AG04450 (cell line): ENCODE measurements at regions of chr1 and their contacts with region 1.

Region 1: DNA sequence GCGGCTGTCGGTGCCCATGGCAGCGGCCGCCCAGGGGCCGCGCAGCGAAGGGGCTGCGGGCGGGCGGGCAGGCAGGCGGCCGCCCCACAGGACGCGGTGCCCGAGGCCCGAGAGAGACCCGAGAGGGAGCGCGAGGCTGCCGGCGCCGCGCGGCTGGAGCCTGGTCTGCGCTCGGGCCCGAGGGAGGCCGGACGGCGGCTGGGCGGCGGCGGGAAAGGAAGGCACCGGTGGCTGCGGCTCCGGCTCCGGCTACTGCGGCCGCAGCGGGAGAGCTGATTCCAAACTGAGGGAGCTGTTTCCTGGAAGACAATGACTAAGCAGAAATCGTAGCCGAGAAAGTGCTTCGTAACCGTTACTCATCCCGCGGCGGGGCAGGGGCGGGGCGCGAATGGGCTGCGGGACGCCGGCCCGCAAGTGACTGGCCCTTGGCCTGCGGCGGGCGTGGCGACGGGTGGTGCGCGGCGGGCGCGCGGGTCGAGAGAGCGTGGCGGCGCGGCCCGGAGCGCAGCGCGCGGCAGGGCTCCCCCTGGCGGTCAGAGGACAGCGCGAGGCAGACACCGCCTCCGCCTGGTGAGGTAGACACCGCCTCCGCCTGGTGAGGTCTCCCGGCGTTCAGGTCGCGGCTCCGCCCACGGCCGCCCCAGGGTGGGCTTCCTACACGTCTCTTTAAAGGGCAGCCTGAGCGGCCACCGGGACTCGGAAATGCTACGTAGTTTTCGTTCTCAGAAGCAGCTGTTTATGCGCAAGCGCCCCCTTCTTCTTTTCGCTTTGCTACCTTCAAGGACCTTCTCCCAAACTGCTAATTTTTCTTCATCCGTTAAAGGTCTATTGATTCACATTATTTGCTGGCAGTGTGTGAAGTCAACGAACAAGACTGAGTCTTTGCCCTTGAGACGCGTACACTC is at the start of gene GCLM:
- DNase-seq: peak; percentile 86
- H3K4me3 ChIP-seq: peak within 1 kb of the TSS; percentile 95
- H3K27ac ChIP-seq: peak within 1 kb of the TSS; percentile 33
- H3K27me3 ChIP-seq: peaks cover 2% of the 10 kb centered on the region
- CTCF ChIP-seq: peak; percentile 78
- polyA plus RNA-seq, gene GCLM: 45.1 and 58.6 TPM in 2 replicates

Region 2: DNA sequence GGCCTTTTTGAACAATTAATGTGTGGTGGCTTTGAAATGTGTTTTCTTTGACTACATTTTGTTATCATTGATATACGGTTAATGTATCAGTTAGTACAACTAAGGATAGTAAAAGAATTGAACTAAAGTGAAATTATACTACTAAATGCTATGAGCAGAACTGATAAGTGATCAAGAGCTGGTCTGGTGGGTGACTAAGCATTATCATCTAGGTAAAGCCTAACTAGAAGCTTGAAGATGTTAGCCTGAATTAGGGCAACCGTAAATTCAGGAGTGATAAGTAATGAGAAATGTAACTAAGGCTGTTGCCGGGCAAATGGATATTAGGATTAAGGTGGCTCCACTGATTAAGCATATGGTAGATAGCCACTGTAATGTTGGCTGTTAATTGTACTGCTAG is 15.8 kb after region 1 on chr1:
- CTCF ChIA-PET with region 1: interaction called, 42 read pairs
- POLR2A ChIA-PET with region 1: no interaction called
- DNase-seq: no peak
- H3K4me3 ChIP-seq: no peak overlapping the region
- H3K27ac ChIP-seq: no peak overlapping the region
- H3K27me3 ChIP-seq: peaks cover 4% of the 10 kb centered on the region
- CTCF ChIP-seq: no peak

Region 3: GRCh38 chr1:93958726-93959100 is 49.3 kb after region 1 on chr1:
- CTCF ChIA-PET with region 1: interaction called, 11 read pairs
- POLR2A ChIA-PET with region 1: no interaction called
- DNase-seq: no peak
- H3K4me3 ChIP-seq: no peak overlapping the region
- H3K27ac ChIP-seq: no peak overlapping the region
- H3K27me3 ChIP-seq: peaks cover 2% of the 10 kb centered on the region
- CTCF ChIP-seq: no peak